Left cardiac atrium (tissue), 4 donors: ENCODE measurements at regions of chr7 and their contacts with region 1.

Region 1: GRCh38 chr7:111486472-111487142 is 75.7 kb downstream of the IMMP2L start:
- DNase-seq: no peak
- ATAC-seq: peak in 1 of 2 donors; percentile 39

Region 2: DNA sequence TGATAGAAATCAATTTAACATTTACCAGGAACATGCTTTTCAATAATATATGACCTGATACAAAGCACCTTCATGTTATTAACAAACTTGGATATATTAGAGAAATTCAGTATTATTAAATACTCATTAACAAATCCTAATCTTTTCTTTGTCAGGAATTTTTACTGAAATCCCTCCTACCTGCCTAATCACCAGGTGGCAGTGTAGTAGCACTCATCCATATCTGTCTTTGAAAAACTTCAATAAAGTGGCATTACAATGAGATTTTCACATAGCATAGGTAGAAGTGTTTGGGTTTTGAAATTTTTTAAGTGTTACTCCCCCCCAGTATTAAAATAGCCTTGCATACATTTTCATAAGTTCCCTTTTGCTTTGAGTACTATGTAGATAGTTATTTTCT is 1642.2 kb before region 1 on chr7:
- intact Hi-C with region 1: loop called in 1 of 2 experiments (anchors 5 kb)
- DNase-seq: no peak
- ATAC-seq: no peak

Region 3: DNA sequence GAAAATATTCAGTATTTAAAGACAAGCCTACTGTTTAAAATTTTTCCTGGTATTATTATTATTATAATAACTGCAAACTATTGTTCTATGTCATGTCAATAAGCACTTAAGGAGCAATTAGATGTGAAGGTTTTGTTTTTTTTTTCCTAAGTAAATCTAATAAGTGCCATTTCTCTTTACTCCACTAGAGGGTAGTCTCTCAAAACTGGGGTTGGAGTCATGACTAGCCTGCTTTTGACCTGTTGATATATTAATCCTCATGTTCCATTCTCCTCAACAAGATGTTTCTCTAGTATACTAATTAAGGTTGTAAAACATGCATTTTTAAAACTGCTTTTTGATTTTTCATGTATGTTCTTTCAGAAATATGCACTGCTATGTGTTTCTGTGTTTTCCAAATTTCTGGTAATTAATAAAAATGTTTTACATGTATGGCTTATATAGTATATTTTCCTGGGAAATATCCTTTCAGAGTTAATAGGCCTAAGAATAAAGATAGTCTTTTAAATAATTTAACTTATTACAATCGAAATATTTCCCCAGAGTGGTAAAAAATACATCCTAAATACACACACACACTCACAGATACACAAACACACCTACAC is 396.7 kb before region 1 on chr7:
- intact Hi-C with region 1: loop called (anchors 5 to 10 kb)
- DNase-seq: no peak
- ATAC-seq: peak; percentile 61 to 71